ENCODE measurements at regions of chr2 and their contacts with region 1.

Region 1: GRCh38 chr2:168118733-168119514 is 128.5 kb downstream of the STK39 start:
- DNase-seq: no peak
- ATAC-seq: peak; percentile 78 to 90 (median 82)
- H3K4me3 ChIP-seq: no peak overlapping the region
- H3K27ac ChIP-seq: peak overlapping the region; percentile 20
- H3K4me1 ChIP-seq: no peaks in the 10 kb centered on the region
- H3K27me3 ChIP-seq: no peaks in the 10 kb centered on the region
- CTCF ChIP-seq: peak; percentile 78

Region 2: GRCh38 chr2:166539340-166540162 is 1579.4 kb before region 1 on chr2:
- intact Hi-C with region 1: loop called in 1 of 2 experiments (anchors 5 kb)
- DNase-seq: no peak
- ATAC-seq: peak; percentile 81 to 96 (median 85)
- H3K4me3 ChIP-seq: peak overlapping the region; percentile 41
- H3K27ac ChIP-seq: no peak overlapping the region
- H3K4me1 ChIP-seq: no peaks in the 10 kb centered on the region
- H3K27me3 ChIP-seq: no peaks in the 10 kb centered on the region
- CTCF ChIP-seq: peak; percentile 78

Region 3: GRCh38 chr2:167264380-167264779 is 854.5 kb before region 1 on chr2:
- intact Hi-C with region 1: loop called (anchors 5 kb)
- DNase-seq: no peak
- ATAC-seq: peak; percentile 43 to 76 (median 57)
- H3K4me3 ChIP-seq: no peak overlapping the region
- H3K27ac ChIP-seq: no peak overlapping the region
- H3K4me1 ChIP-seq: no peaks in the 10 kb centered on the region
- H3K27me3 ChIP-seq: no peaks in the 10 kb centered on the region
- CTCF ChIP-seq: peak; percentile 40

Region 4: GRCh38 chr2:167729911-167730310 is 389.0 kb before region 1 on chr2:
- intact Hi-C with region 1: loop called in 1 of 2 experiments (anchors 10 kb)
- DNase-seq: no peak
- ATAC-seq: peak in 3 of 4 donors; percentile 24 to 60 (median 54)
- H3K4me3 ChIP-seq: no peak overlapping the region
- H3K27ac ChIP-seq: no peak overlapping the region
- H3K4me1 ChIP-seq: peaks cover 28% of the 10 kb centered on the region
- H3K27me3 ChIP-seq: no peaks in the 10 kb centered on the region
- CTCF ChIP-seq: no peak

Region 5: GRCh38 chr2:167964650-167965413 is 154.1 kb before region 1 on chr2:
- intact Hi-C with region 1: loop called in 1 of 2 experiments (anchors 5 kb)
- DNase-seq: no peak
- ATAC-seq: no peak
- H3K4me3 ChIP-seq: no peak overlapping the region
- H3K27ac ChIP-seq: no peak overlapping the region
- H3K4me1 ChIP-seq: no peaks in the 10 kb centered on the region
- H3K27me3 ChIP-seq: no peaks in the 10 kb centered on the region
- CTCF ChIP-seq: peak; percentile 6

Measured in psoas muscle (tissue), 8 donors.